HepG2 (cell line): ENCODE measurements at regions of chr5 and their contacts with region 1.

Region 1: DNA sequence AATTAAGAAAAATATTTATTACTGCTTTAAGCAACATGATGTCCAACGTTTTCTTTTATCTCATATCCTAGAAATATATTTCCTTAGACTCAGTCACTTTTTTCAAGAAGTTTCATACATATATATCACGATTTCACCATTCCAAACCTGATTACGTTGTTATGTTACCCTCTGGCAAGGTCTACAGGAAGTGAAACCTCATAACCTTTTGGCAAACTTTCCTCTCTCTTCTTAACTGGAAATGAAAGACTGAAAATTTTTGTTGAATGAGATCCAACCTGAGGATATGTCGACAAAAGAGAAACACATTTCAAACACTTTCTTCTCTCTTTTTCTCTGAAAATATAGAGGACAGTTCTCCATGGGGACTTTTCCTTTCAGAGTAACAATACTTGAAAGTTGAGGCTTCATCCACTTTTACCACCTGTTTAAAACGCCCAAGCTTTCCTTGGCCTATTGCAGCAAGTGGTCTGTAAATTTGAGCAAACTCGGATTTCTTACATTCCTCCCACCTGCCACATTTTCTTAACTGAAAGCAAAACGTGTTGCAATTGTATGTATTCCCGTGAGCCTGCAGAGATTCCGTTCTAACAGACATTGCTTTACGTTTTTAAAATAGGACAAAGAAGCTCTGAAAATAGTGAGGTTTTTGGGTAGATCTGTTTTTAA is 298.1 kb downstream of the CETN3 start:
- DNase-seq: no peak
- ATAC-seq: no peak
- H3K4me3 ChIP-seq: no peak overlapping the region
- H3K27ac ChIP-seq: no peak overlapping the region
- H3K4me1 ChIP-seq: no peaks in the 10 kb centered on the region
- H3K27me3 ChIP-seq: no peaks in the 10 kb centered on the region
- CTCF ChIP-seq: no peak
- EP300 ChIP-seq: no peak
- POLR2A ChIP-seq: no peak
- RAD21 ChIP-seq: no peak

Region 2: GRCh38 chr5:89816038-89816437 is 295.5 kb before region 1 on chr5:
- CTCF ChIA-PET with region 1: no interaction called
- POLR2A ChIA-PET with region 1: no interaction called
- in situ Hi-C with region 1: no loop called
- intact Hi-C with region 1: loop called (anchors 5 kb)
- DNase-seq: no peak
- ATAC-seq: no peak
- H3K4me3 ChIP-seq: no peak overlapping the region
- H3K27ac ChIP-seq: no peak overlapping the region
- H3K4me1 ChIP-seq: no peaks in the 10 kb centered on the region
- H3K27me3 ChIP-seq: no peaks in the 10 kb centered on the region
- CTCF ChIP-seq: no peak
- EP300 ChIP-seq: no peak
- POLR2A ChIP-seq: no peak
- RAD21 ChIP-seq: no peak

Region 3: DNA sequence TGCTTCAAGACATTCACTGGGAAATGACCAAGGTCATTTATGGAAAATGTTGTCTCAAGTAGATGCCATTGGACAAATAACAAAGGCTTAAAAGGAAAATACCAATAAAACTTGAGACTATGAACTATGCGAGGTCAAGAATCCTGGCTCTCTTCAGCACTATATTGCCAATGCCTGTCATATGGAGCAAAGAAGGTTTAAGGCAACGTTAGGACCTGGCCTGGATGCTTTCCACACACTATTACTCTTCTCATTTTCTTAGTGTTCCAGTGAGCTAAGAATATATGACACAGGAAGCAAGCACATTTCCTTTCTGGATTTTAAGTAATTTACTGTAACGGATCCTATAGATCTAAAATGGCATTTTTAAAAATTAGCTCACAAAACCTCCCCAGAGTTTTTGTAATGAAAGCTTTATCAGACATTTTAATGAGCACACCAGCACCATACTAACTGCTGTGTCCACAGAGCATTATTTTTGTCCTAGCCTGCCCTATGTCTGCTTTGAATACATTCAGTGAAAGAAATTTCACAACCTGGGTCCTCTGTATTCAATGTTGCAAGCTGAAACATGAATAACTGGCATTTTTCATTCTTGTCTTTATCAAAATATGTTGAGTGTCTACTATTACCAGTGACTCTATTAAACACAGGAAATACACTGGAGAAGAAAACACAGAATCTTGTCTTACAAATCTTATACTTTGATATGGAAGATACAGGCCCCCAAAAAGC is 17.6 kb before region 1 on chr5:
- CTCF ChIA-PET with region 1: no interaction called
- POLR2A ChIA-PET with region 1: no interaction called
- in situ Hi-C with region 1: no loop called
- intact Hi-C with region 1: loop called (anchors 1 kb)
- DNase-seq: no peak
- ATAC-seq: no peak
- H3K4me3 ChIP-seq: no peak overlapping the region
- H3K27ac ChIP-seq: no peak overlapping the region
- H3K4me1 ChIP-seq: no peaks in the 10 kb centered on the region
- H3K27me3 ChIP-seq: no peaks in the 10 kb centered on the region
- CTCF ChIP-seq: no peak
- EP300 ChIP-seq: no peak
- POLR2A ChIP-seq: no peak
- RAD21 ChIP-seq: no peak

Region 4: GRCh38 chr5:90201923-90202322 is 90.4 kb after region 1 on chr5:
- CTCF ChIA-PET with region 1: no interaction called
- POLR2A ChIA-PET with region 1: no interaction called
- in situ Hi-C with region 1: no loop called
- intact Hi-C with region 1: no loop called
- DNase-seq: no peak
- ATAC-seq: no peak
- H3K4me3 ChIP-seq: no peak overlapping the region
- H3K27ac ChIP-seq: no peak overlapping the region
- H3K4me1 ChIP-seq: no peaks in the 10 kb centered on the region
- H3K27me3 ChIP-seq: no peaks in the 10 kb centered on the region
- CTCF ChIP-seq: no peak
- EP300 ChIP-seq: no peak
- POLR2A ChIP-seq: no peak
- RAD21 ChIP-seq: no peak